ENCODE measurements at regions of chr9 and their contacts with region 1.

Region 1: GRCh38 chr9:93095205-93096130 is 549 bp upstream of the CARD19 start:
- DNase-seq: peak; percentile 90 to 100
- H3K4me3 ChIP-seq: peak overlapping the region; percentile 90; the same call in 1 of the 2 replicates
- H3K27ac ChIP-seq: peak overlapping the region; percentile 82
- H3K4me1 ChIP-seq: peaks cover 57% of the 10 kb centered on the region
- H3K27me3 ChIP-seq: no peaks in the 10 kb centered on the region
- CTCF ChIP-seq: no peak

Region 2: GRCh38 chr9:92970467-92970923 is 125.0 kb before region 1 on chr9:
- CTCF ChIA-PET with region 1: interaction called, 5 read pairs
- POLR2A ChIA-PET with region 1: interaction called, 30 read pairs
- intact Hi-C with region 1: loop called (anchors 1 kb)
- DNase-seq: peak; percentile 76 to 85
- H3K4me3 ChIP-seq: no peak overlapping the region
- H3K27ac ChIP-seq: peak overlapping the region; percentile 30; the same call in 1 of the 2 replicates
- H3K4me1 ChIP-seq: peaks cover 54% of the 10 kb centered on the region
- H3K27me3 ChIP-seq: no peaks in the 10 kb centered on the region
- CTCF ChIP-seq: no peak

Region 3: DNA sequence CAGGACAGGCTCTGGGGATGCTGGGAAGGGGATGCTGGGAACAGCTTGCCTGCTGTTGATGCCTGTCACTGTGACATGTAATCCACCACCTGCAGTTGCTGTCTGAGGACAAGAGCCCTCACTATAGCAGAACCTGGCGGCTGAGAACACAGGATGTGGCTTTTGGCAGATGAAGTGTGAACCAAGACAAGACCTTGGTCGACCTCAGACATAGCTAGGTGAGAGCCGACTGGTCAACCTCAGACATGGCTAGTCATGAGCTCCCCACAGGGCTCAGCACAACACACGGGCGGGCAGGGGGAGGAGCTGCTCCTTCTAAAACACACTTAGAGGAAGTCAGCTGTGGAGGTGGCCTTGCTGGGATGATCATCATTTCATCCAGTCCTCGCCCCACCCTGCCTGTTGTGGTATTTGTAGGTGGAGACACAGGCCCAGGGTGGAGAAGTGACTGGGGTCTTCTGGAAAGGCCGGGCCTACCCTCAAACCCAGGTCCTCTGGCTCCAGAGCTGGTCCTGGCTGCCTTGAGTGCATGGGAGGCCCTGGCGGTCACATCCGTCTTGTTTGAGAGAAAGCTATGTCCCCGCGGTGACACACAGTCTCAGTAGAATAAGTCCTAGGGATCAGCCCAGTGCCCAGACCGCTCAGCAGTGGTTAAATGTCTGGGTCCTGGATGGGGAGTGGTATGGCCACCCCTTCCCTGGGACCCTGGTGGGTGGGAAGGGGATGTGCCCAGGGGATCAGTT is 30.9 kb before region 1 on chr9:
- CTCF ChIA-PET with region 1: no interaction called
- POLR2A ChIA-PET with region 1: no interaction called
- intact Hi-C with region 1: loop called (anchors 5 kb)
- DNase-seq: no peak
- H3K4me3 ChIP-seq: no peak overlapping the region
- H3K27ac ChIP-seq: no peak overlapping the region
- H3K4me1 ChIP-seq: no peaks in the 10 kb centered on the region
- H3K27me3 ChIP-seq: no peaks in the 10 kb centered on the region
- CTCF ChIP-seq: no peak

Region 4: DNA sequence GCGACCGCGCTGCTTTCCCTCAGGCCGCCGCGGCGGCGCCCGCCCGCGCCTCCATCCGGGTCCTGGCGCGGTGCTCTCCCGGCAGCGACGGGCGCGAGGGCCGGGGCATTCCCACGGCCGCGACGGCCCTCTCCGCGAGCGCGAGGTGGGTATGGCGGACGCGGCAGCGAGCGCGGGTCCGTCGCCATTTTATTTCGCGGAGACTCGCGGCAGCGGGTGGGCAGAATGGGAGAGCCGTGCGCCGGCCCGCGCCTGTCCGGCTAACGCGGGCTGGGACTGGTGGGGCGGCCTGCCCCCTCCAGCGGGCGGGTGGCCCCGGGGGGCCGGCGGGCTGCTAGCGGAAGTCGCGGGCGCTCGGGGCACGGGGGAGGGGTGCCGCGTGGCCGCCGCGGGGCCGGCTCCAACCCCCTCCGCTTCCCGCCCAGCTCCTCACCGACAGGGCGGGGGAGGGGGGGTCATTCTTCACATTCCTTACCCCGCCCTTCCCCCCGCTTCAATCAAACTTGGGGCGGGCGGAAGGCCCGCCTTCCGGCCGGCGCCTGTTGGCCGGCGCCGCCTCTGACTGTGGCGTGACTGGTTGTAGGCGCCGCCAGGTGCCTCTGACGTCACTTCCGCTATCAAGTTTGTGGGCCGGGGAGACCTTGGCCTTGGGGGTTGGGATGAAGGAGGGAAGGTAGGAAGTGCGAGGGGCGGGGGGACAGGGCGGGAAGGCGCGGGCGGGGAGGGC is 1070.9 kb after region 1 on chr9:
- CTCF ChIA-PET with region 1: no interaction called
- POLR2A ChIA-PET with region 1: no interaction called
- intact Hi-C with region 1: loop called (anchors 5 kb)
- DNase-seq: peak; percentile 94 to 98
- H3K4me3 ChIP-seq: peak overlapping the region; percentile 92
- H3K27ac ChIP-seq: peak overlapping the region; percentile 96
- H3K4me1 ChIP-seq: peaks cover 35% of the 10 kb centered on the region
- H3K27me3 ChIP-seq: no peaks in the 10 kb centered on the region
- CTCF ChIP-seq: no peak